Heart right ventricle (tissue), 16 donors: ENCODE measurements at regions of chr2 and their contacts with region 1.

Region 1: GRCh38 chr2:182971820-182972547 is 66.3 kb downstream of the NCKAP1 start:
- DNase-seq: no peak
- ATAC-seq: no peak
- H3K4me3 ChIP-seq: no peak overlapping the region
- H3K27ac ChIP-seq: no peak overlapping the region
- H3K4me1 ChIP-seq: peaks cover 0 to 40% (median 6%) of the 10 kb centered on the region in 9 donors
- H3K27me3 ChIP-seq: no peaks in the 10 kb centered on the region
- CTCF ChIP-seq: no peak

Region 2: DNA sequence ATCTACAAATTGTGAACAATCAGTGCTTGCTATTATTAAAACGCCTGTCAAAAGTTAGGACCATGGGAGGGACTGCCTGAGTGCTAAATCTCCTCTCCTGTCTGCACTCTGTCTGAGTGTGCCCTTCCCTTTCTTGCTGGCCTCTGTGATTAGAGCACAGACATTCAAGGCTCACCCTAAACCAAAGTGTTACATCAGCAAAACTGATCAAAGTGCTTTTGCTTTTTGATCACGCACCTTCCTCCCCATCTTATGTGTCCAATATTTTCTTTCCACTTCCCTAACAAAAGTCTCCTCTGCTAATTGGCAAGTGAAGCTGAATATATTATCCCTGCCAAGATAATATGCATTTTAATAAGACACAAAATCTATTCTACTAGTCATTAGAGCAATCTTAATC is 286.4 kb before region 1 on chr2:
- intact Hi-C with region 1: no loop called
- DNase-seq: no peak
- ATAC-seq: no peak
- H3K4me3 ChIP-seq: no peak overlapping the region
- H3K27ac ChIP-seq: no peak overlapping the region
- H3K4me1 ChIP-seq: peaks cover 0 to 4% (median 0%) of the 10 kb centered on the region in 9 donors
- H3K27me3 ChIP-seq: no peaks in the 10 kb centered on the region
- CTCF ChIP-seq: no peak

Region 3: GRCh38 chr2:182937870-182938269 is 34.1 kb before region 1 on chr2:
- intact Hi-C with region 1: loop called in 1 of 10 experiments (anchors 5 kb)
- DNase-seq: no peak
- ATAC-seq: no peak
- H3K4me3 ChIP-seq: no peak overlapping the region
- H3K27ac ChIP-seq: no peak overlapping the region
- H3K4me1 ChIP-seq: peaks cover 0 to 13% (median 3%) of the 10 kb centered on the region in 9 donors
- H3K27me3 ChIP-seq: no peaks in the 10 kb centered on the region
- CTCF ChIP-seq: no peak